Natural killer cell (primary cell): ENCODE measurements at regions of chr6 and their contacts with region 1.

Region 1: DNA sequence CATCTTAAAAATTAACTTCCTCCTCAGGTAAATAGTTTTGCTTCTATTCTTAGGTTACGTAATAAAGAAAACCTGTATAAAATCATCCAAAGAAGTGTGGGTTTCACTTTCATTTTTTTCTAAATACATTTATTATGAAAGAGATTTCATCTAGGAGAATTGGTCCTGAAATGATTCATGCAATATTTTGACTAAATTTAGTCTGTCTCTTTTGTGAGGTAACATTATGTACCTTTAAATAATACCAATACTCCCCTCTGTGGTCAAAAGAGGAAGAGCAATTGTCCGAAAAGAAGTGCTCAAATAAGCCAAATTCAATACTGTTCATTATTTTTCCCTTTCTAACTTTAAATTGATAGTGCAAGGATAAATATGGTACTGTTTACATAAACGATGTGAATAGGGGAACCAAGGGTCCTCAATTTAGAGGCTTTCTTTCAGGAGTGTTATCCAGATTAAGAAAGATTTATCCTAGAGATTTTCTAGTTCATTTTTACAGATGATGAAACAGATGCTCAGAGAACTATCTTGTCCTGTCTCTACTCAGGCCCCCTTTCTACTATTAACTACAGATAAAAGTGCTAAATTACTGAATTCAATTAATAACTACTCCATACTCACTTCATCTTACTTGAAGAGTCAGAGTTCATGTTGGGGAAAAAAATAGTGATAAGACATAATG is 26.2 kb downstream of the CYP39A1 start:
- DNase-seq: peak in 1 of 2 donors; percentile 23
- ATAC-seq: no peak
- H3K4me3 ChIP-seq: no peak overlapping the region
- H3K4me3 Mint-ChIP-seq: no peak overlapping the region
- H3K27ac ChIP-seq: no peak overlapping the region
- H3K27ac Mint-ChIP-seq: no peak overlapping the region
- H3K4me1 ChIP-seq: no peaks in the 10 kb centered on the region
- H3K4me1 Mint-ChIP-seq: no peaks in the 10 kb centered on the region
- H3K27me3 ChIP-seq: no peaks in the 10 kb centered on the region
- H3K27me3 Mint-ChIP-seq: peaks cover 21 to 26% of the 10 kb centered on the region in 2 donors
- CTCF ChIP-seq: peak; percentile 51

Region 2: GRCh38 chr6:45930420-45931040 is 695.8 kb before region 1 on chr6:
- intact Hi-C with region 1: loop called (anchors 5 kb)
- DNase-seq: peak; percentile 40 to 75
- ATAC-seq: peak; percentile 47 to 75 (median 62)
- H3K4me3 ChIP-seq: no peak overlapping the region
- H3K4me3 Mint-ChIP-seq: no peak overlapping the region
- H3K27ac ChIP-seq: no peak overlapping the region
- H3K27ac Mint-ChIP-seq: no peak overlapping the region
- H3K4me1 ChIP-seq: no peaks in the 10 kb centered on the region
- H3K4me1 Mint-ChIP-seq: peaks cover 0 to 5% of the 10 kb centered on the region in 2 donors
- H3K27me3 ChIP-seq: no peaks in the 10 kb centered on the region
- H3K27me3 Mint-ChIP-seq: peaks cover 0 to 5% of the 10 kb centered on the region in 2 donors
- CTCF ChIP-seq: peak; percentile 98

Region 3: GRCh38 chr6:46530896-46531295 is 95.5 kb before region 1 on chr6:
- intact Hi-C with region 1: no loop called
- DNase-seq: no peak
- ATAC-seq: no peak
- H3K4me3 ChIP-seq: no peak overlapping the region
- H3K4me3 Mint-ChIP-seq: no peak overlapping the region
- H3K27ac ChIP-seq: no peak overlapping the region
- H3K27ac Mint-ChIP-seq: no peak overlapping the region
- H3K4me1 ChIP-seq: no peaks in the 10 kb centered on the region
- H3K4me1 Mint-ChIP-seq: no peaks in the 10 kb centered on the region
- H3K27me3 ChIP-seq: peaks cover 8% of the 10 kb centered on the region
- H3K27me3 Mint-ChIP-seq: peaks cover 14 to 21% of the 10 kb centered on the region in 2 donors
- CTCF ChIP-seq: no peak

Region 4: GRCh38 chr6:47483853-47484546 is 857.6 kb after region 1 on chr6:
- intact Hi-C with region 1: no loop called
- DNase-seq: no peak
- ATAC-seq: no peak
- H3K4me3 ChIP-seq: no peak overlapping the region
- H3K4me3 Mint-ChIP-seq: no peak overlapping the region
- H3K27ac ChIP-seq: no peak overlapping the region
- H3K27ac Mint-ChIP-seq: peak overlapping the region; percentile 24 to 71
- H3K4me1 ChIP-seq: no peaks in the 10 kb centered on the region
- H3K4me1 Mint-ChIP-seq: peaks cover 29 to 57% of the 10 kb centered on the region in 2 donors
- H3K27me3 ChIP-seq: no peaks in the 10 kb centered on the region
- H3K27me3 Mint-ChIP-seq: no peaks in the 10 kb centered on the region
- CTCF ChIP-seq: no peak